ENCODE measurements at regions of chr2 and their contacts with region 1.

Region 1: DNA sequence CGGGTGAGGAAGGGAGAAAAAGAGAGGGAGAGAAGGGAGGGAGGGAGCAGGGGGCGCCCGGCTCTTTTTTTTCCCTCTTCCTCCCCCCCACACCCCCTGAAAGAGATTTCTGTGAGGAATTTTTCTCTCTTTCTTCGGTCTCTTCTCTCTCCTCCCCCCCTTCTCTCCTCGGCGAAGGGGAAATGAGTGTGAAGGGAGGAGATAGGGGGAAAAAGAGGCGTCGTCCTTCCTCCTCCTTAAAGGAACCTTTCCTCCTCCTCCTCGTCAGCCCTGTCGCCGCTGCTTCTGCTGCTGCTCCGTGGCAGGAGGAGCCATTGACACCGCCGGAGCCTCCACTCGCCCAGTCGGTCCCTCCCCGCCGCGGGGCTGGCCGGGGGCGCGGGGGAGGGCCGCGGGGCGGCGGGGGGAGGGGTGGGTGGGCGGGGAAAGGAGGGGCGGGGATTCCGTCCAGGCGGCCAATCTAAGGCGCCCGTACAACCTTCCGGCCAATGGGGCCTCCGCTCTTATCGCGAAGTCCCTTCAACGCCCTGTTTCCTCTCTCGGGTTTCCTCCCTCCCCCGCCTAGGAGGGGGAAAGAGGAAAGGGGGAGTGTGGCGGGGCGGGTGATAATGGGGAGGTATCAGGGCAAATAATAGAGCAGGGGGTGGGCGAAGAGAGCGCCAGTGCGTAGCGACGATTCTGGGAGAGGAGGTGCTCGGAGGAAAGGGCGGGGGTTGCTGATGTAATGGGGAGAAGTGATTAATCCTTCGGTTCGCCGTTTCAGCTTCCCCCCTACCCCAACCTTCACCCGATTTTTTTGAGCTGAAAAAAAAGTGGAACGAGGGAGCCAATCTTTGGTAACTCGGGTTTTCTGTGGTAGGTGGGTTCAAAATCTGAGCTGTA is at the start of gene FBXO11:
- DNase-seq: peak; percentile 93
- ATAC-seq: peak; percentile 89
- H3K4me3 ChIP-seq: peak within 1 kb of the TSS; percentile 77
- H3K27ac ChIP-seq: peak within 1 kb of the TSS; percentile 95
- H3K4me1 ChIP-seq: no peaks in the 10 kb centered on the region
- H3K27me3 ChIP-seq: no peaks in the 10 kb centered on the region
- CTCF ChIP-seq: no peak; a peak in 3 of 6 replicates
- EP300 ChIP-seq: no peak
- POLR2A ChIP-seq: peak; percentile 96
- RAD21 ChIP-seq: no peak
- polyA plus RNA-seq, gene FBXO11: 7.1 to 8.8 TPM

Region 2: GRCh38 chr2:47867205-47867604 is 39.2 kb before region 1 on chr2:
- CTCF ChIA-PET with region 1: interaction called, 3 read pairs
- POLR2A ChIA-PET with region 1: no interaction called
- RAD21 ChIA-PET with region 1: interaction called, 3 read pairs
- SMC1A ChIA-PET with region 1: interaction called, 33 read pairs
- in situ Hi-C with region 1: no loop called
- intact Hi-C with region 1: loop called (anchors 2 kb)
- DNase-seq: no peak
- ATAC-seq: peak; percentile 23; the same call in 1 of the 3 replicates
- H3K4me3 ChIP-seq: no peak overlapping the region
- H3K27ac ChIP-seq: 0 out of 2 replicates have a peak overlapping the region, but pooled peaks have one; percentile 8
- H3K4me1 ChIP-seq: no peaks in the 10 kb centered on the region
- H3K27me3 ChIP-seq: no peaks in the 10 kb centered on the region
- CTCF ChIP-seq: no peak
- EP300 ChIP-seq: no peak
- POLR2A ChIP-seq: no peak
- RAD21 ChIP-seq: no peak

Region 3: DNA sequence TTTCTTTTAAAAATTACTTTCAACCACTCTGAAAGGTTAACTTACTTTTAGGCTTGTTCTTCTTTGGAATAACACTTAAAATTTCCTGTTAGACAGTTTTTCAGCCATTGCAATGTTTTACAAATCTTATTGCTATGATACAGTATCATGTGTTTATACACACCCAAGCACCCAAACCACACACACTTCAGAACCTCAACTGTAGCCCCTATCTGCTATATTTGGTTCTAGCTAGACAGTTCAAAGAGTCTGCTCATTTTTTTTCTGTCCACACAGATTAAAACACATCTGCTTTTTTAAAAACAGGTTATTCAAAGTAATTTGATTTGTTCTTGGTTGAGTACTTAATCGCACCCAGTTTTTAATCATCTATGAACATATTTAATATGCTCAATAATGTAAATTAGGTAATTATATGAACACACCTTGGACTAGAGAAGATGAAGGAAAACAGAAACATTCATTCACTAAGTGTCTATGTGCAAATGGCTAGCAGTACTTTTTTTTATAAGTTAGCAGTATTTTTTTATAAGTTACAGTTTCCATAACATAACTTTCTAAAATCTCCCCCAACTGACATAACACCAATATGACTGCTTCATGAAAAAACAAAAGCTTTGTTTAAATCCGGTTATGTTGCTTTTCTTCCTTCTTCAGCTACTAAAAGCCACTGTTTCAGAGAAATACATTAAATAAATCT is 17.7 kb before region 1 on chr2:
- CTCF ChIA-PET with region 1: interaction called, 4 read pairs
- POLR2A ChIA-PET with region 1: interaction called, 5 read pairs
- RAD21 ChIA-PET with region 1: interaction called, 3 read pairs
- SMC1A ChIA-PET with region 1: interaction called, 10 read pairs
- in situ Hi-C with region 1: no loop called
- intact Hi-C with region 1: no loop called
- DNase-seq: no peak
- ATAC-seq: peak; percentile 68
- H3K4me3 ChIP-seq: no peak overlapping the region
- H3K27ac ChIP-seq: no peak overlapping the region
- H3K4me1 ChIP-seq: no peaks in the 10 kb centered on the region
- H3K27me3 ChIP-seq: no peaks in the 10 kb centered on the region
- CTCF ChIP-seq: no peak
- EP300 ChIP-seq: no peak; a peak in 1 of 4 replicates
- POLR2A ChIP-seq: no peak
- RAD21 ChIP-seq: no peak

Region 4: DNA sequence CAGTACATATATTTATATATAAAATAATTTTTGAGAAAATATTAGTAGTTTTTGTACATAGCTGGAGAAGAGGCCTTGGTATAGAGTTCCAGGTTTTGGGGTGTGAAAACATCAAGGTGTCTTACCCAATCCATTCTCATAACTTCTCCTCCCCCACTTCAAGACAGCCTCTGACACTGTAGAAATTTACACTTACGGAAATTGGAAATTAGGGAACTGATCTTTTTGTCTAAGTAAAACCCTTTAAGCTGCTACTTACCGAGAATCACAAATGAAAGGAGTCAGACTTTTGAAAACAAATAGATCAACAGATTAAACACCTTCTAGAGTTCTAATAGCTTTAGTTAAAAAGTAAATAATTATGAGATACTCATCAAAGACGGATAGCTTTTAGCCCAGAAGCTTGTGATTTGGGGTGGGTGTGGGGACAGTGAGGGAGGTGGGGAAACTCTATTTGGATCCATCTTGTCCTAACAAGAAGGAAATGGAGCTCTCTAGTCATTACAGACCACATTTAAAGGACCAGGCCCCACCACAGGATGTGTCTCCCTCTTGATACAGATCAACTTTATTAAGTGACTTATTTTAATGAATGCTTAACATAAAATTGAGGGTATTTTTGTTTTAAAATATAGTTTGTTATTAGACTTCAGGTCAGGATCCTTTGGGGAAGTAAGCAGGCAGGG is 11.0 kb after region 1 on chr2:
- CTCF ChIA-PET with region 1: interaction called, 10 read pairs
- POLR2A ChIA-PET with region 1: interaction called, 3 read pairs
- RAD21 ChIA-PET with region 1: interaction called, 7 read pairs
- SMC1A ChIA-PET with region 1: no interaction called
- in situ Hi-C with region 1: no loop called
- intact Hi-C with region 1: no loop called
- DNase-seq: no peak
- ATAC-seq: no peak
- H3K4me3 ChIP-seq: no peak overlapping the region
- H3K27ac ChIP-seq: no peak overlapping the region
- H3K4me1 ChIP-seq: no peaks in the 10 kb centered on the region
- H3K27me3 ChIP-seq: no peaks in the 10 kb centered on the region
- CTCF ChIP-seq: no peak
- EP300 ChIP-seq: no peak
- POLR2A ChIP-seq: no peak
- RAD21 ChIP-seq: no peak

Region 5: GRCh38 chr2:47984041-47984440 is 77.6 kb after region 1 on chr2:
- CTCF ChIA-PET with region 1: no interaction called
- POLR2A ChIA-PET with region 1: no interaction called
- RAD21 ChIA-PET with region 1: no interaction called
- SMC1A ChIA-PET with region 1: no interaction called
- in situ Hi-C with region 1: no loop called
- intact Hi-C with region 1: no loop called
- DNase-seq: no peak
- ATAC-seq: peak; percentile 45
- H3K4me3 ChIP-seq: no peak overlapping the region
- H3K27ac ChIP-seq: no peak overlapping the region
- H3K4me1 ChIP-seq: no peaks in the 10 kb centered on the region; the same call in 1 of the 2 replicates
- H3K27me3 ChIP-seq: peaks cover 0 to 7% of the 10 kb centered on the region in 2 experiments; a peak in 2 of 4 replicates
- CTCF ChIP-seq: no peak
- EP300 ChIP-seq: no peak
- POLR2A ChIP-seq: no peak
- RAD21 ChIP-seq: no peak

Region 6: DNA sequence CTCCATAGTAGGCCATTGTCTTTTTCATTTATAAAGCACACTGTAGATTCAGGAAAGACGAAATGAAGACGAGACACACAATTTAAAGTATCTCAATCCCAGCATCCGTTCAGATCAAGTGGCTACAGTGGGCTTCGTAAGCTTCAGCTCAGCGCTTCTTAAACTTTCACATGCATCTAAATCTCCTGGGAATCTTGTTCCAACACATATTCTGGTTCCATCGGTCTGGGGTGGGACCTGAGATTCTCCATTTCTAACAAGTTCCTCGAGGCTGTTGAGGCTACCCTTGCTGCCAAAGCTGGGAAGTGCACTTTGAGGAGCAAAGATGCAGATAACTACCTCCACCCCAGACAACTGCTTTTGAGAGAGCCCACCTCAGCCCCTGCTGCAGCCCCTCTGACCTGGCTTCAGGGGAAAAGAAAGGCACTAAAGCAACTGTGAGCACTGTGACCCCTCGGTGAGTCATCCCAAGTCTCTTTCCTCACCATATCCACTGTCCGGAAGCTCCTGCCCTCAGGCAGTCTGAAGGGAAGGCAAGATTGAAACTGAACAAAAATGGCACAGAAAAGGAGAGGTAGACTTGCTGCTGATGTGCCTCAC is 201.0 kb after region 1 on chr2:
- CTCF ChIA-PET with region 1: interaction called, 19 read pairs
- POLR2A ChIA-PET with region 1: interaction called, 3 read pairs
- RAD21 ChIA-PET with region 1: interaction called, 8 read pairs
- SMC1A ChIA-PET with region 1: interaction called, 7 read pairs
- in situ Hi-C with region 1: no loop called
- intact Hi-C with region 1: loop called (anchors 1 kb)
- DNase-seq: no peak
- ATAC-seq: no peak
- H3K4me3 ChIP-seq: no peak overlapping the region
- H3K27ac ChIP-seq: no peak overlapping the region
- H3K4me1 ChIP-seq: peaks cover 8% of the 10 kb centered on the region
- H3K27me3 ChIP-seq: no peaks in the 10 kb centered on the region
- CTCF ChIP-seq: no peak
- EP300 ChIP-seq: no peak
- POLR2A ChIP-seq: no peak
- RAD21 ChIP-seq: no peak

Region 7: DNA sequence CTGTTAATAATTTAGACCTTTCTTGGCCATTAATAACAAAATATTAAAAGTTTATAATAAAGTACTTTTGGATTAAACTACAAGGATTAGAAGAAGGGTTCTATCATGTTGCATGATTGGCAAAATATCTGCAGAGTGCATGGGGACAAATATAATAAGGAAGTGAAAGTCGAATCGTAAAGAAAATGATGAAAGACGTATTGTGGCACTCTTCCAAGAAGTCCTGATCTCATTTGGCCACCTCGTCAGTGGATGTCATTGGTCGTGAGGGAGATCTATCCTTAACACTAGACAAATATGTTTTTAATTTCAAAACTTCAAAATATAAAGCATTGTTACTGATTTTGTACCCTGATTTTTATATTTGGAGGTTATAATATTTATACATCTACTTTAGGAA is 425.9 kb after region 1 on chr2:
- CTCF ChIA-PET with region 1: no interaction called
- POLR2A ChIA-PET with region 1: no interaction called
- RAD21 ChIA-PET with region 1: no interaction called
- SMC1A ChIA-PET with region 1: no interaction called
- in situ Hi-C with region 1: loop called (anchors 10 kb)
- intact Hi-C with region 1: no loop called
- DNase-seq: no peak
- ATAC-seq: peak; percentile 82
- H3K4me3 ChIP-seq: no peak overlapping the region
- H3K27ac ChIP-seq: no peak overlapping the region; the same call in 1 of the 2 replicates
- H3K4me1 ChIP-seq: peaks cover 12% of the 10 kb centered on the region
- H3K27me3 ChIP-seq: no peaks in the 10 kb centered on the region
- CTCF ChIP-seq: no peak
- EP300 ChIP-seq: peak in 1 of 2 experiments; percentile 60; a peak in 1 of 4 replicates
- POLR2A ChIP-seq: no peak
- RAD21 ChIP-seq: no peak

Region 8: DNA sequence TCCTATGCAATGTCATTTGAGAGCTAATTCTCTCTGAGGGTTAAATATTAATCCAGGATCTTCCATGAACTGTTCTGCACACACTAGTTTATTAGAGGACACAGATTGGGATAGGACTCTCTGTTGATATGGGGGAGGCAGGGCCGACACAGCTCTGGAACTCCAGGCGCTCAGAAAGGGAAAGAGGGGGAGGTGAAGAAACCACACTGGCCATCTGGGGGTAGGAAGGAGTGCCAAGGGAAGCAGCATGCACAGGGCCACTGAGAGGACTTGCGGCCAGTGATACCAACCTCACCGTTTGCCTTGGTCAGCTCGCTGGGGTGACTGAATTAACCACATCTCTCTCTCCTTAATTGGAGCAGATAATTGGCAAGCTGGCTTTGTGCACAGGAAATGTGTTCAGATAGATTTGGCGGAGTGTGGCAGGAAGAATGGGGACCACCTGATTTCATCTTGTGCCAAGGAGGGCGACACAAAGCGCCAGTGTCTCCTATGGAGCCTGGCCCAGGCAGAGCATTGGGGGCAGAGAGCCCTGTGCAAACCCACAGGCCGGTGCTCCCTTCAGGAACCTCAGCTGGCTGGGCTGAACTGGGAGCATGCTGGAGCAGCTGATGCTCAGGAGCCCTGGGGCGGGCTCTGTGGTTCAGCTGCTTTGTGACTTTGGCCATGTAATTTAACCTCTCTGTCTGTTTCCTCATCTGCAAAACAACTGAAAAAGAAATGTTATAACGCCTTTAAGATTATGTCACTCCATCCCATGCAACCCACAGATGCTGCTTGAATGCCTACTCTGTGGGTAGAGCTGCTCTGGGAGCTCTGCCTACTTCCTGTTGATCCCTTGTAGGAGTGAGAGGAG is 508.8 kb after region 1 on chr2:
- CTCF ChIA-PET with region 1: interaction called, 3 read pairs
- POLR2A ChIA-PET with region 1: no interaction called
- RAD21 ChIA-PET with region 1: no interaction called
- SMC1A ChIA-PET with region 1: no interaction called
- in situ Hi-C with region 1: no loop called
- intact Hi-C with region 1: loop called (anchors 5 kb)
- DNase-seq: no peak
- ATAC-seq: peak; percentile 55
- H3K4me3 ChIP-seq: no peak overlapping the region
- H3K27ac ChIP-seq: no peak overlapping the region
- H3K4me1 ChIP-seq: peaks cover 17% of the 10 kb centered on the region
- H3K27me3 ChIP-seq: no peaks in the 10 kb centered on the region
- CTCF ChIP-seq: no peak
- EP300 ChIP-seq: no peak
- POLR2A ChIP-seq: no peak
- RAD21 ChIP-seq: no peak

Measured in GM12878 (cell line).